ENCODE measurements at regions of chr11 and their contacts with region 1.

Region 1: GRCh38 chr11:22304337-22304961 is 33.7 kb upstream of the SLC17A6 start:
- DNase-seq: no peak
- ATAC-seq: no peak
- H3K4me3 ChIP-seq: no peak overlapping the region
- H3K27ac ChIP-seq: no peak overlapping the region
- H3K4me1 ChIP-seq: no peaks in the 10 kb centered on the region
- H3K27me3 ChIP-seq: no peaks in the 10 kb centered on the region

Region 2: GRCh38 chr11:22169833-22170232 is 134.6 kb before region 1 on chr11:
- intact Hi-C with region 1: loop called in 3 of 4 experiments (anchors 10 kb)
- DNase-seq: no peak
- ATAC-seq: no peak
- H3K4me3 ChIP-seq: no peak overlapping the region
- H3K27ac ChIP-seq: no peak overlapping the region
- H3K4me1 ChIP-seq: no peaks in the 10 kb centered on the region
- H3K27me3 ChIP-seq: no peaks in the 10 kb centered on the region

Region 3: DNA sequence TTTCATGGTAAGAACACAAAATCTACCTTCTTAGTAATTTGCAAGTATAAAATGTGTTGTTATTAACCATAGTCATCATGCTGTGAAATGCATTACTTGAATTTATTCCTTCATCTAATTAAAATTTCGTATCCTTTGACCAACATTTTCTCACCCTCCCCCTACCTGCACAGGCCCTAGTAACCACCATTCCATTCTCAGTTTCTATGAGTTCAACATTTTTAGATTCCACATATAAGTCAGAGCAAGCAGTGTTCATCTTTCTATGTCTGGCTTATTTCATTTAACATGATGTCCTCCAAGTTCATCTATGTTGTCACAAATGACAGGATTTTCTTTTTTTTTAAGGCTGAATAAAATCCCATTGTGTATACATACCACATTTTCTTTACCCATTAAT is 599.3 kb after region 1 on chr11:
- intact Hi-C with region 1: no loop called
- DNase-seq: no peak
- ATAC-seq: no peak
- H3K4me3 ChIP-seq: no peak overlapping the region
- H3K27ac ChIP-seq: no peak overlapping the region
- H3K4me1 ChIP-seq: no peaks in the 10 kb centered on the region
- H3K27me3 ChIP-seq: no peaks in the 10 kb centered on the region

Measured in right cardiac atrium (tissue), 5 donors.